ENCODE measurements at regions of chr10 and their contacts with region 1.

Region 1: DNA sequence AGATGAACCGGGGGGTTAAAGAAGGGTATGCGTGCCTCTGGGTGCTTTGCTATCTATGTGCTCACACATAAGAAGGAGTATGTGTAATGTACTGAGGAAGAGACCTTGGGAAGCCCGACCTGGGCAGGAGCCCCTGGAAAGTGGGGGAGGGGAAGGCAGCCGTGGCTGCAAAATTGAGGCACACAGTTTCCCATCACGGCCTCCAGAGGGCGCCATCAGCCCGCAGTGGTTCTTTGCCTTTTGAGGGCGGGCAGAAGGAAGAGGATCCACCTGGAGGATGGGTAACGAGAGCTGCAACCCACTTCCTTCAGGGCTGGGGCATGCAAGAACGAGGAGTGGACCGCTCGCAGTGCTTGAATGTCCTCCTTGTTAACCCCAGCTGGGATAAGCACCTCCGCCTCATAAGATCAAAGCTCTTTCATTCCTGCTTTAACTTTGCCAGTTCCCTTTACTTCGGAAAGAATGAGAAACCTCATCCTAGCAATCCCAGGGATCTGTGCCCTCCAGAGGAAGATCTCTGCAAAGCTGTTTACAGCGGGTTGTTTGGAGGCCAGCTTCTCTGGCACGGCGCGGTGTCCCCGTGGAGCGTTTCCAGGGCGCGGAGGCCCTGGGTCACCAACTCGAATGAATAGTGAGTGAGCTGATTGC is 77.9 kb downstream of the PCGF5 start:
- DNase-seq: peak; percentile 58
- ATAC-seq: peak; percentile 97
- H3K4me3 Mint-ChIP-seq: peak overlapping the region; percentile 70
- H3K27ac Mint-ChIP-seq: no peak overlapping the region
- H3K4me1 Mint-ChIP-seq: peaks cover 9% of the 10 kb centered on the region
- H3K27me3 Mint-ChIP-seq: peaks cover 8% of the 10 kb centered on the region
- CTCF ChIP-seq: peak; percentile 53

Region 2: DNA sequence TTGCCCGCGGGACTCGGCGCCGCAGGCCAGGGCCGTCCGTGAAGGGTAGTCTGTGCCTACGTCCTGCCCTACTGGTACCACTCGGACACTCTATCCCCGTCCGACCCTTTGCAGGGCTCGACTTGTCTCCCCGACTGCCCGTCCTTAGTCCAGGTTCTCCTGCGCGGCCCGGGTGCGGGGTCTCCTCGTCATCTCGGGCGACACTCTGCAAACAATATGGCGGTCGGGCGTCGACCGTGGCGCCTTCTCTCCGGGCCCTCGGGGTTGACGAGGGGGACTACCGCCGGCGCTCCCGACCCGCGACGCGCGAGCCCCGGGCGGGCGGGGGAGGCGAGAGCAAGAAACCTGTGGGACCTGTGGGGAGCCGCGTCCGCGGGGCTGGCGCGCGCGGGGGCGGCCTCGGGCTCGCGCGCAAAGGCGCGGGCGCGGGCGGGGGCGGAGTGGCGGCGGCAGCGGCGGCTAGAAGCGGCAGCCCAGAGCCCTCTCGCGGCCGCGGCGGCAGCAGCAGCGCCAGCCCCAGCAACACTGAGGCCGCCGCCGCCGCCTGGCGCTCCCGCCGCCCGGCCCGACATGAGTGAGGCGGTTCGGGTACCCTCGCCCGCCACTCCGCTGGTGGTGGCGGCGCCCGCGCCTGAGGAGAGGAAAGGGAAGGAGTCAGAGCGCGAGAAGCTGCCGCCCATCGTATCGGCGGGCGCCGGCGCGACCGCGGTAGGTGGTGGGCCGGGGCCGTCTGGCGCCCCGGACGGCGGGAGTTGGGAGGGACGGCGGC is 111.7 kb after region 1 on chr10 and contains the start of gene HECTD2:
- CTCF ChIA-PET with region 1: no interaction called
- POLR2A ChIA-PET with region 1: no interaction called
- intact Hi-C with region 1: loop called (anchors 1 kb)
- DNase-seq: peak; percentile 84
- ATAC-seq: peak; percentile 82
- H3K4me3 Mint-ChIP-seq: peak within 1 kb of the TSS; percentile 89
- H3K27ac Mint-ChIP-seq: peak within 1 kb of the TSS; percentile 90
- H3K4me1 Mint-ChIP-seq: peaks cover 13% of the 10 kb centered on the region
- H3K27me3 Mint-ChIP-seq: no peaks in the 10 kb centered on the region
- CTCF ChIP-seq: no peak
- total RNA-seq, gene HECTD2: 8.1 and 8.6 TPM in 2 replicates

Region 3: GRCh38 chr10:91627344-91628102 is 329.2 kb after region 1 on chr10:
- CTCF ChIA-PET with region 1: interaction called, 8 read pairs
- POLR2A ChIA-PET with region 1: no interaction called
- intact Hi-C with region 1: loop called (anchors 2 kb)
- DNase-seq: no peak
- ATAC-seq: no peak
- H3K4me3 Mint-ChIP-seq: no peak overlapping the region
- H3K27ac Mint-ChIP-seq: no peak overlapping the region
- H3K4me1 Mint-ChIP-seq: peaks cover 2% of the 10 kb centered on the region
- H3K27me3 Mint-ChIP-seq: peaks cover 34% of the 10 kb centered on the region
- CTCF ChIP-seq: no peak

Region 4: DNA sequence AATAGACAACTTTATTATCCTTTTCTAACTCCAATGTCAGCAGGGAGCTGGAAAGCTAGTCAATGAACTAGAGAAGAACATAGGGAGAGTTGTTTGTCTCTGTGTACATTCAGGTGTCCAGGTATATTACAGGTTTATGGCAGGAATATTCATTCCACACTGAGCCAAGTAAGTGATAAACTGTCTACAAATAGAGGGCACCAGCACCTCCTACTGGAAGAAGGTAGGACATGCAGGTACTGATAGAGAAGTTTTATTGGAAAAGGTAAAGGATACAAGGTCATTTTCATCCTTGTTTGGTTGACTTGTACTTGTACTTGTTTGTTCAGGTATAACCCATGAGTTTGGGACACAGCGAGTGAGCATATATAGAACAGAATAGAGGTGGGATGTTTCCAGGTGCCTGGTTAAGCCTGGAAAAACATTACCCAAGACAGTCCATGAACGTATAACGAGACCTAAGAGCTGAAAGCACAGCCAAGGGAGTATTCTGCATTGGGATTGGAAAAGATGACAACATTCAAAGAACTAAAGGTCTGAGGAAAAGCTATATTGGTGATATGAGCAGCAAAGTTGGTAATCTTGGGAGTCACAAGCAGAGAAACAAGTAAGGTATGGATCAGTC is 395.9 kb after region 1 on chr10:
- CTCF ChIA-PET with region 1: no interaction called
- POLR2A ChIA-PET with region 1: no interaction called
- intact Hi-C with region 1: loop called (anchors 10 kb)
- DNase-seq: no peak
- ATAC-seq: no peak
- H3K4me3 Mint-ChIP-seq: no peak overlapping the region
- H3K27ac Mint-ChIP-seq: no peak overlapping the region
- H3K4me1 Mint-ChIP-seq: no peaks in the 10 kb centered on the region
- H3K27me3 Mint-ChIP-seq: peaks cover 3% of the 10 kb centered on the region
- CTCF ChIP-seq: no peak